H1 (cell line): ENCODE measurements at regions of chr3 and their contacts with region 1.

Region 1: DNA sequence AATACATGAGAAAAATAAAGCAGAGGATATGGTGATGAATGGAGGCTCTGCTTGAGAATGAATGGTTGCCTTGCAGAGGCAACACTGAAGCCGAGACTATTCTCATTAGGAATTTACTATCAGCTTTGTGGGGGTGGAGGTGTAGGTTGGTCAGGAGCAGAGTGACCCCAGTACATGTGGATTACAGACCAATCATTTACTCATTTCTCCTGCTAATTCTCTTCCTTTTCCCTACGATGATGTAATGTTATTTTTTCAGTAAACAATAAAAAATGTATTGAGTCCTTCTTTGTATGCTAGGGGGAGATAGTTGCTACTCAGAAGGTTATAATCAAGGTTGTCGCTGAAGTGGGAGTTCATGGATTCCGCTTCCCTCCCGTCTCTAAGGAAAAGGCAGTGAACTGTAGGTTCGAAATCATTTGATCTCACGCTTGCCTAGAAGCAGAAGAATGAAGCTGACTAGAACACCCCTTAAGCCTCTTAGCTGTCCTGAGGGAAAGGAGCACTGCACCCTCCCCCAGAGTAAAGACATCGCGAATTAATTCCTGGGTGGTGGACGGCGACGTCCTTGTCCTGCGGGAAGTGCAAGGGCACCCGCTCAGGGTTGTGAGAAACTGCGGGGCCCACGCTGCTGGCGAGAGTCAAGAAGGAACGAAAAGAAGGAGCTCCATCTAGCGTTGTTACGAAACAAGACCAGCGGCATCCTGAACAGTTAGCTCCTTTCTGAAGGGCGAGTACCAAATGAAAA is 213.2 kb upstream of the PFN2 start:
- DNase-seq: peak; percentile 27 to 74
- H3K4me3 ChIP-seq: peak overlapping the region in 3 of 4 experiments; percentile 26 to 58 (median 27); a peak in 5 of 8 replicates
- H3K27ac ChIP-seq: no peak overlapping the region
- H3K4me1 ChIP-seq: peaks cover 0 to 6% (median 0%) of the 10 kb centered on the region in 4 experiments; a peak in 1 of 7 replicates
- H3K27me3 ChIP-seq: 0 out of 7 replicates have a peak, but pooled peaks cover 0 to 2% (median 0%) of the 10 kb centered on the region in 4 experiments
- CTCF ChIP-seq: peak; percentile 49 to 83 (median 79)
- EP300 ChIP-seq: no peak
- POLR2A ChIP-seq: no peak
- RAD21 ChIP-seq: peak; percentile 92 to 93

Region 2: GRCh38 chr3:149958171-149958796 is 225.6 kb before region 1 on chr3:
- CTCF ChIA-PET with region 1: interaction called, 11 read pairs
- POLR2A ChIA-PET with region 1: interaction called, 3 read pairs
- DNase-seq: no peak
- H3K4me3 ChIP-seq: no peak overlapping the region
- H3K27ac ChIP-seq: no peak overlapping the region
- H3K4me1 ChIP-seq: peaks cover 0 to 4% (median 2%) of the 10 kb centered on the region in 4 experiments; a peak in 3 of 7 replicates
- H3K27me3 ChIP-seq: no peaks in the 10 kb centered on the region
- CTCF ChIP-seq: peak in 1 of 3 experiments; percentile 52; a peak in 2 of 4 replicates
- EP300 ChIP-seq: no peak
- POLR2A ChIP-seq: peak in 1 of 2 experiments; percentile 38; a peak in 1 of 3 replicates
- RAD21 ChIP-seq: peak; percentile 1 to 32; a peak in 1 of 4 replicates

Region 3: GRCh38 chr3:150022381-150023238 is 161.2 kb before region 1 on chr3:
- CTCF ChIA-PET with region 1: interaction called, 12 read pairs
- POLR2A ChIA-PET with region 1: interaction called, 6 read pairs
- DNase-seq: no peak
- H3K4me3 ChIP-seq: no peak overlapping the region
- H3K27ac ChIP-seq: no peak overlapping the region
- H3K4me1 ChIP-seq: peaks cover 0 to 8% (median 4%) of the 10 kb centered on the region in 4 experiments; a peak in 5 of 7 replicates
- H3K27me3 ChIP-seq: no peaks in the 10 kb centered on the region
- CTCF ChIP-seq: no peak
- EP300 ChIP-seq: no peak
- POLR2A ChIP-seq: no peak
- RAD21 ChIP-seq: no peak

Region 4: GRCh38 chr3:150149651-150150051 is 34.2 kb before region 1 on chr3:
- CTCF ChIA-PET with region 1: interaction called, 16 read pairs
- POLR2A ChIA-PET with region 1: no interaction called
- DNase-seq: no peak
- H3K4me3 ChIP-seq: no peak overlapping the region
- H3K27ac ChIP-seq: no peak overlapping the region
- H3K4me1 ChIP-seq: no peaks in the 10 kb centered on the region
- H3K27me3 ChIP-seq: no peaks in the 10 kb centered on the region
- CTCF ChIP-seq: no peak
- EP300 ChIP-seq: no peak
- POLR2A ChIP-seq: no peak
- RAD21 ChIP-seq: no peak

Region 5: DNA sequence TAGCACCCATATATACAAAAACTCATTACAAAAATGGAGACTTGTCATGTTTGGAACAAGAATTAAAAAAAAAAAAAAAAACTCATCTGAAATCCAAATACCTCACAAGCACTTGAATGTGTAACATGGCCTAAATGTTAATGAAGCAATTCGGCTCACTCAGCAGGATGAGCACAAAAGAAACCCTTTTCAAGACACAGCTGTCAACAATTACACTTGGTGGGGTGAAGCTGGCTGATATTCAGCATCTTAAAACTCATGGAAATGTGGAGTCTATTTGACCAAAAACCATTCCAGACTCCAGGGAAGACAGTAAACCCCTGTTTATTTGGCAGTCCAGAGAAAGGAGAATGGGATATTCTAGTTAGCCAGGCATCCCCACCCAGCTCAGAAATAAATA is 18.9 kb after region 1 on chr3:
- CTCF ChIA-PET with region 1: interaction called, 18 read pairs
- POLR2A ChIA-PET with region 1: interaction called, 8 read pairs
- DNase-seq: no peak
- H3K4me3 ChIP-seq: no peak overlapping the region
- H3K27ac ChIP-seq: no peak overlapping the region
- H3K4me1 ChIP-seq: peaks cover 0 to 6% (median 3%) of the 10 kb centered on the region in 4 experiments; a peak in 5 of 7 replicates
- H3K27me3 ChIP-seq: no peaks in the 10 kb centered on the region
- CTCF ChIP-seq: no peak
- EP300 ChIP-seq: no peak
- POLR2A ChIP-seq: no peak
- RAD21 ChIP-seq: no peak

Region 6: GRCh38 chr3:150268426-150269391 is 84.9 kb after region 1 on chr3:
- CTCF ChIA-PET with region 1: no interaction called
- POLR2A ChIA-PET with region 1: no interaction called
- DNase-seq: no peak
- H3K4me3 ChIP-seq: no peak overlapping the region
- H3K27ac ChIP-seq: no peak overlapping the region
- H3K4me1 ChIP-seq: no peaks in the 10 kb centered on the region
- H3K27me3 ChIP-seq: no peaks in the 10 kb centered on the region
- CTCF ChIP-seq: no peak
- EP300 ChIP-seq: no peak
- POLR2A ChIP-seq: no peak
- RAD21 ChIP-seq: no peak